Naive thymus-derived CD4-positive, alpha-beta T cell (primary cell): ENCODE measurements at regions of chr2 and their contacts with region 1.

Region 1: GRCh38 chr2:57126410-57126809 is 920.2 kb upstream of the VRK2 start:
- DNase-seq: no peak
- ATAC-seq: no peak
- H3K4me3 ChIP-seq: no peak overlapping the region
- H3K4me3 Mint-ChIP-seq: no peak overlapping the region
- H3K27ac ChIP-seq: no peak overlapping the region
- H3K27ac Mint-ChIP-seq: no peak overlapping the region
- H3K4me1 ChIP-seq: no peaks in the 10 kb centered on the region
- H3K4me1 Mint-ChIP-seq: no peaks in the 10 kb centered on the region
- H3K27me3 ChIP-seq: no peaks in the 10 kb centered on the region
- H3K27me3 Mint-ChIP-seq: no peaks in the 10 kb centered on the region

Region 2: GRCh38 chr2:57100436-57100835 is 26.0 kb before region 1 on chr2:
- CTCF ChIA-PET with region 1: no interaction called
- POLR2A ChIA-PET with region 1: no interaction called
- intact Hi-C with region 1: loop called in 1 of 2 experiments (anchors 2 kb)
- DNase-seq: no peak
- ATAC-seq: no peak
- H3K4me3 ChIP-seq: no peak overlapping the region
- H3K4me3 Mint-ChIP-seq: no peak overlapping the region
- H3K27ac ChIP-seq: no peak overlapping the region
- H3K27ac Mint-ChIP-seq: no peak overlapping the region
- H3K4me1 ChIP-seq: no peaks in the 10 kb centered on the region
- H3K4me1 Mint-ChIP-seq: no peaks in the 10 kb centered on the region
- H3K27me3 ChIP-seq: no peaks in the 10 kb centered on the region
- H3K27me3 Mint-ChIP-seq: no peaks in the 10 kb centered on the region

Region 3: GRCh38 chr2:57207191-57207590 is 80.8 kb after region 1 on chr2:
- CTCF ChIA-PET with region 1: no interaction called
- POLR2A ChIA-PET with region 1: no interaction called
- intact Hi-C with region 1: no loop called
- DNase-seq: no peak
- ATAC-seq: no peak
- H3K4me3 ChIP-seq: no peak overlapping the region
- H3K4me3 Mint-ChIP-seq: no peak overlapping the region
- H3K27ac ChIP-seq: no peak overlapping the region
- H3K27ac Mint-ChIP-seq: no peak overlapping the region
- H3K4me1 ChIP-seq: no peaks in the 10 kb centered on the region
- H3K4me1 Mint-ChIP-seq: no peaks in the 10 kb centered on the region
- H3K27me3 ChIP-seq: no peaks in the 10 kb centered on the region
- H3K27me3 Mint-ChIP-seq: no peaks in the 10 kb centered on the region

Region 4: DNA sequence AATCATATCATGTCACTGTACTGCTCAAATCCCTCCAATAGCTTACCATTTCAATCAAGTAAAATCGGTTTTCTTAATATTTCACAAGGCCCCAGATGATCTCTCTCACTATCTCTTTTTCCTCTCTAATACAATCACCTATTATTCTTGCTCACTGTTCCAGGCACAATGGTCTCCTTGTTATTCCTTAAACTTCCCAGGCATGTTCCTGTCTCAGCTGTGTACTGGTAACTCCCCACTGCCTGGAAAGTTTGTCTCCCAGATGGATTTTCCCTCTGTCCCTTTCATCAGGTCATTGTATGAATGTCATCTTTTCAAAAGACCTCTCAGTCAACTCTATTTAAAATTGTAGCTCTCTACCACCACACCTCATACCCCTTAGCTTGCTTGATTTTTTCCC is 1145.4 kb after region 1 on chr2:
- CTCF ChIA-PET with region 1: no interaction called
- POLR2A ChIA-PET with region 1: no interaction called
- intact Hi-C with region 1: no loop called
- DNase-seq: no peak
- ATAC-seq: no peak
- H3K4me3 ChIP-seq: no peak overlapping the region
- H3K4me3 Mint-ChIP-seq: no peak overlapping the region
- H3K27ac ChIP-seq: no peak overlapping the region
- H3K27ac Mint-ChIP-seq: no peak overlapping the region
- H3K4me1 ChIP-seq: no peaks in the 10 kb centered on the region
- H3K4me1 Mint-ChIP-seq: no peaks in the 10 kb centered on the region
- H3K27me3 ChIP-seq: no peaks in the 10 kb centered on the region
- H3K27me3 Mint-ChIP-seq: peaks cover 0 to 6% (median 0%) of the 10 kb centered on the region in 5 donors